ENCODE measurements at regions of chr11 and their contacts with region 1.

Region 1: DNA sequence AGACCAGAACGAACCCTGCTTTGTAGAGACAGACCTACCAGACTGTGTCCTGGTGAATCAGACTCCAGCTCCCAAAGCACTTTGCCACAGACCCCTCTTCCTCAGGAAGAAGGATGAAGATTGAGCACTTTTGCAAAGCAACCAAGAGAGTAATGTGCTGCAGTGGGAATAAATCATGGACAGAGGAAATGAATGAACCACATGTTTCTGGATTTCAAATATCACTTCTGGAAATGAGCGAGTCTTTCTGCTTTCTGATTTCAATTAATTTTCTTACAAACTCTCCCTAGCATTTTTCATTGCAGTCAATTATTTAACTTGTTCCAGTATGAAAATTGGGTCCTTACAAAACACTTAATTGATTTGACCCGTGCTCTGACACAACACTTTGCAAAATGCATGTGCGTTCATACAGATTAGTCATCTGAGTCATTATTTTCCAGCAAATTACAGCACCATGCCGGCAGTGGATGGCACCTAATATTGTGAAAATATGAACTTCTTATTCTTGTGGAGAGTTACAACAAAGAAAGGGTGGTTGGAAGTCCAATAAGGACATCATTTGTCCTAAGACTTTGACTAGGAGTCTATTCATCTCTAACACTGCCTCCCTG is 315.9 kb upstream of the CCDC90B start:
- DNase-seq: no peak
- H3K4me3 ChIP-seq: no peak overlapping the region
- H3K27ac ChIP-seq: peak overlapping the region in 4 of 59 donors; percentile 5 to 10 (median 8)
- H3K27me3 ChIP-seq: no peaks in the 10 kb centered on the region
- CTCF ChIP-seq: no peak

Region 2: DNA sequence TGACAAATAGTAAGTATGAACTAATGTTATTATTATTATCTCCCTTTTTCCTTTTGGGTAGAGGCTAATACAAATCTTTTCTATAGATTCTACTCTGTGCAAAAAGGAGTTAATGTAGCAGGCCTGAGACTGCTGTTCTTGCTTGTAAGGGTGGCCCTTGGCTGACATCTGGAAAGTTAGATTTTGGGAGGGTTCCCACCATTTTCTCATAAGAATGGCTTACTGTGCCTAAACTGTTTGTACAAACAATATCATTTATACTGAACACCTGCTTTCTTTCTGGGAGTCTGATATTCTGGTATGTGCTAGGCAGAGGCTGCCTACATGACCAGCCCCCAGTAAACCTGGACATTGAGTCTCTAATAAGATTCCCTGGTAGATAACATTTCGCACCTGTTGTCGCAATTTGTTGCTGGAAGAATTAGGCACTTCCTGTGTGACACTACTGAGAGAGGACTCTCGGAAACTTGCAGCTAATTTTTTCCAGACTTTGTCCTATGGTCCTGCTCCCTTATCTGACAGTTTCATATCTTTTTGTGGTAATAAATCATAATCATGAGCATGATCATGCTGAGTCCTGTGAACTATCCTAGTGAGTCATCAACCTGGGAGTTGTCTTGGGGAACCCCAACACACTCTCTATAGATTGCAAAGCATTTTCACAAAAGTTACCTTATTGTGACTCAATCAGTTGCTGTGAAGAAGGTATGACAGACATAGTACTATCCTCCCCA is 58.1 kb before region 1 on chr11:
- intact Hi-C with region 1: loop called in 1 of 2 experiments (anchors 10 kb)
- DNase-seq: no peak
- H3K4me3 ChIP-seq: no peak overlapping the region
- H3K27ac ChIP-seq: peak overlapping the region in 29 of 59 donors; percentile 1 to 73 (median 50)
- H3K27me3 ChIP-seq: no peaks in the 10 kb centered on the region
- CTCF ChIP-seq: no peak

Region 3: DNA sequence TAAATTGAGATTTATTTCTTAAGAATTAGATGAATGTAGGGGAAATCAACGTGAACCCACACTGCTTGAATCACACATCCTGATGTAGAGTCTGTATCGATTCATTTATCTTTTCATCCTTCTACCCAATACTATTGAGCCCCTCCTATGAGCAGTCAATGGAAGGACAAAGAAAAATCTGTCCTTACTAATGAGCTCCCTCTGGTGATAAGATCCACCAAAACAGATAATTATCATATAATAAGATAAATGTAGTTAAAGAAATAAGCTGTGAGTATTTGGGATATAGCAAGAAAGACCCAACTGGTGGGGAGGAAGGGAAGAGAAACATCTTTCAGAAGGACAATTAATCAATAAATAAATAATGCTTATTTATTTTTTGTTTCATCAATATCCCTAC is 69.3 kb after region 1 on chr11:
- intact Hi-C with region 1: no loop called
- DNase-seq: no peak
- H3K4me3 ChIP-seq: no peak overlapping the region
- H3K27ac ChIP-seq: peak overlapping the region in 6 of 59 donors; percentile 0 to 36 (median 18)
- H3K27me3 ChIP-seq: no peaks in the 10 kb centered on the region
- CTCF ChIP-seq: peak in 47 of 56 donors; percentile 5 to 67 (median 39)